Uterus (tissue), 4 donors: ENCODE measurements at regions of chr12 and their contacts with region 1.

Region 1: GRCh38 chr12:6278439-6279255 is 31.8 kb upstream of the PLEKHG6 start:
- DNase-seq: peak; percentile 83 to 91
- H3K4me3 ChIP-seq: peak overlapping the region; percentile 29 to 53
- H3K27ac ChIP-seq: peak overlapping the region; percentile 92 to 95
- H3K4me1 ChIP-seq: peaks cover 5 to 14% of the 10 kb centered on the region in 2 donors
- H3K27me3 ChIP-seq: no peaks in the 10 kb centered on the region
- CTCF ChIP-seq: peak; percentile 63 to 100 (median 98)
- POLR2A ChIP-seq: peak in 1 of 2 donors; percentile 82

Region 2: DNA sequence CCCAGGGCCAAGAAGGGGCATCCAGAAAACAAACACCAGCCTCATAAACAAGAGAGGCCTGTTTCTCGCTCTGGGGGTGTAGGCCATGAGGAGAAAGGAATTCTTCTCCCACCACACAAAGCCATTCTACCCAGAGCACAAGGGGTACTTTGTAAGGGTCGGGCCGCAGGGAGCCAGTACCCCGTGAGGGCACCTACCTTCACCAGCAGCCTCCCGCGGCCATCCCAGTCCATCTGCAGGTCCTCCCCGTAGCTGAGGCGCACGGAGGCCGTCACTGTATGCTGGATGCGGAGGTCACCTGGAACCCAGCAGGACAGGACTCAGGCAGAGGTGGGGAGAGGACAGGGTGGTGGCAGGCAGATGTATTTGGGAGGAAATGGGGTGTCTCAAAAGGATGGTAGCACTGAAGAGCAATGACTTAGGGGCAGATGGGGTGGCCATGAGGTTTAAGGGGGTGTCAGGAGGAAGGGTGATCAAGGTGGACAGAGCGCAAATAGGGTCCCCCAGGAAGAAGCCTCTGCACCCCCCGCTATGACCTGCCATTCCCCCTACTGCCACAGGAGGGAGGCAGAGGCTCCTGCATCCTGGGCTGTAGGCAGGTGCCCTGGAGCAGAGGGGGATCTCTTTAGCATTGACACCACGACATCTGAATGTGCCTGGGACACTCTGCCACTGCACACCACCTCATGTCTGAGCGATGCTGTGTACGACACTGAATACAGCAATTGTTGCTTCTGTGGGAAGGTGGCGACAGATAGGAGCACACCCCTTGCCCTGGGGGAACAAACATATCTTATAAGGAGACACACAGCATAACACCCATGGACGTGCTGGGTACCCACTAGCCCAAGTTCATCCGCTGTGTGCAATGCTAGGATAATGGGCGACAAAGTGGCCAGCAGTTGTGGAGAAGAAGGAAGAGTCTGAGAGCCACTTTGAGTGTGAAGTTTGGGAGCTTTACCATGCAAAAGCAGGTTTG is 215.6 kb before region 1 on chr12:
- intact Hi-C with region 1: loop called (anchors 5 kb)
- DNase-seq: peak; percentile 30 to 36
- H3K4me3 ChIP-seq: no peak overlapping the region
- H3K27ac ChIP-seq: peak overlapping the region in 1 of 2 donors; percentile 7
- H3K4me1 ChIP-seq: no peaks in the 10 kb centered on the region
- H3K27me3 ChIP-seq: no peaks in the 10 kb centered on the region
- CTCF ChIP-seq: peak; percentile 60 to 83 (median 76)
- POLR2A ChIP-seq: no peak

Region 3: GRCh38 chr12:6199531-6200265 is 78.9 kb before region 1 on chr12:
- intact Hi-C with region 1: loop called (anchors 2 kb)
- DNase-seq: peak; percentile 64 to 77
- H3K4me3 ChIP-seq: peak overlapping the region; percentile 72 to 88
- H3K27ac ChIP-seq: peak overlapping the region; percentile 95 to 97
- H3K4me1 ChIP-seq: peaks cover 2 to 22% of the 10 kb centered on the region in 2 donors
- H3K27me3 ChIP-seq: no peaks in the 10 kb centered on the region
- CTCF ChIP-seq: peak in 1 of 4 experiments; percentile 15
- POLR2A ChIP-seq: no peak